Activated B cell treated with CpG ODN at 0.5 μM for 24 hours (primary cell): ENCODE measurements at regions of chr3 and their contacts with region 1.

Region 1: DNA sequence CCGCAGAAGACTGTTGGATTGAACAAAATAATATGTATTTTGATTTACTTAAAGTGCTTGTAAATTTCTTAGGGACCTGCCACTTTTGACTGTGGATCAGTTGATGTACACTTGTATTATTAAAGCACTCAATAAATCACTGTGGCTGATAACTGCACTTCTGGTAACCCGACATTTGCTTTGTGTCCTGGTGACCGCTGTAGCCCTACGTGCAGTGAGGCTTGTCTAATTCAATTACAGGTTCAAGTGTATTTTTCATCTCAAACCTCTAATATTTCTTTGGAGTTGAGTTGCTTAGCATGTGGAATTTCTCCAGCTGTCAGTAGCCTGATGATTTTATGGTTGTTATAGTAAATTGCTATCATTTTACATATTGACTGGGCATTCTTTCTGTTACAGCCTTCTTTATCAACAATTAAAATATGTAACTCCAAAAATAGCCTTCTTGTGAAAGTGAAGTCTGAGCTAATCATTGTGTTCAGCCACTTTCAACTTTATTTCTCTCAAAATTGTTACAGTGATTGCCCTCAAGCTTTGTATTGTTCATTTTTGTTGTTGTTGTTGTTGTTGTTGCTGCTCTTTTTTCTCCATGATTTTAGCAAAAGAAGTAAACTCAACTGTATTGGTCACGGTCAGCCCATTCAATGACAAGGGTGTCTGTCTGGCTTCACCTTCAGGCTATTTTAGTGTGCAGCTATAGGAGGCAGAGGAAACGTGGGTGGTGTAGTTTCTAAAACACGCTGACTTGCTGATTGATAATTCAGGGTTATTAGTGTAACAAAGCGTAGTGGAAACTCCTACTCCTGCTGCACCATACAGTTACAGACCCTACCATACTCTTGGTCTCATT is 215.1 kb upstream of the UBE2E1 start:
- DNase-seq: no peak
- ATAC-seq: no peak
- H3K4me3 Mint-ChIP-seq: no peak overlapping the region
- H3K27ac Mint-ChIP-seq: no peak overlapping the region
- H3K4me1 Mint-ChIP-seq: peaks cover 26% of the 10 kb centered on the region
- H3K27me3 Mint-ChIP-seq: no peaks in the 10 kb centered on the region
- CTCF ChIP-seq: no peak

Region 2: GRCh38 chr3:23457697-23458096 is 133.0 kb before region 1 on chr3:
- CTCF ChIA-PET with region 1: no interaction called
- POLR2A ChIA-PET with region 1: interaction called, 12 read pairs
- intact Hi-C with region 1: no loop called
- DNase-seq: no peak
- ATAC-seq: no peak
- H3K4me3 Mint-ChIP-seq: no peak overlapping the region
- H3K27ac Mint-ChIP-seq: no peak overlapping the region
- H3K4me1 Mint-ChIP-seq: peaks cover 42% of the 10 kb centered on the region
- H3K27me3 Mint-ChIP-seq: no peaks in the 10 kb centered on the region
- CTCF ChIP-seq: no peak